ENCODE measurements at regions of chrX and their contacts with region 1.

Region 1: DNA sequence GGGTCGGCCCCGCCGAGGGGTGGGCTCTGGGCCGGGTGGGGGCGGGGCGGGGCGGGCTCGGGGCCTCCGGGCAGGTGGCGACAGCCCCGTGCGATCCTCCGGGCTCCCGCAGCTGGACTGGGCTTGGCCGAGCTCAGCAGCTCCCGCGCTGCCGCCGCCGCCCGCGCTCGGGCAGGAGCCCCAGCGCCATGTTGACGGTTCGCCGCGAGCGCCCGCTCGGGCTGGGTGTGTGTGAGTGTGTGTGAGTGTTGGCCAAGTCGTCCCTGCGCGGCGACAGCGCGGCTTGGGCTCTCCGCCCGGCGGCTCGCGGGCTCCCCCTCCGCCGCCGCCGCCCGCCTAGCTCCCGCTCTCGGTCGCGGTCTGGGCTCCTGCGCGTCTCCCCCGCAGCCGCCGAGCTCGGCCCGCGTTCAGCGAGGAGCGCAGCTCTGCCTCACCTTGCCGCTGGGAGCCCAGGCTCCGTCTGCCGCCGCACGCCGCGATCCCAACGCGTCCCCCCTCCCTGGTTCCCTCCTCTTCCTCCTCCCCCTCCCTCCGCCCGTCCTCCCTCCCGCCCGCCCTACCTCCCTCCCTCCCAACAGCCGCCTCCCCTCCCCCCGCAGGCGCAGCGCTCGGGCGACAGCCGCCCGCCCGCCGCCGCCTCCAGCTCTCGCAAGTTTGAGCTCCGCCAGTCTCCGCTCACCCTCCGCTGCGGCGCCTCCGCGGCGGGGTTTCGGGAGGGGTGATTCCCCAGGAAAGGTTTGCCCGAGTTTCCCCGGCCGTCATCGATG is at the start of gene BCOR:
- DNase-seq: no peak
- ATAC-seq: peak; percentile 18
- H3K4me3 ChIP-seq: peak within 1 kb of the TSS; percentile 72
- H3K27ac ChIP-seq: peak within 1 kb of the TSS; percentile 74
- H3K4me1 ChIP-seq: peaks cover 4% of the 10 kb centered on the region; the same call in 1 of the 2 replicates
- H3K27me3 ChIP-seq: no peaks in the 10 kb centered on the region
- CTCF ChIP-seq: no peak
- EP300 ChIP-seq: no peak
- POLR2A ChIP-seq: peak; percentile 90
- RAD21 ChIP-seq: no peak
- polyA plus RNA-seq, gene BCOR: 5.1 to 8.0 TPM

Region 2: DNA sequence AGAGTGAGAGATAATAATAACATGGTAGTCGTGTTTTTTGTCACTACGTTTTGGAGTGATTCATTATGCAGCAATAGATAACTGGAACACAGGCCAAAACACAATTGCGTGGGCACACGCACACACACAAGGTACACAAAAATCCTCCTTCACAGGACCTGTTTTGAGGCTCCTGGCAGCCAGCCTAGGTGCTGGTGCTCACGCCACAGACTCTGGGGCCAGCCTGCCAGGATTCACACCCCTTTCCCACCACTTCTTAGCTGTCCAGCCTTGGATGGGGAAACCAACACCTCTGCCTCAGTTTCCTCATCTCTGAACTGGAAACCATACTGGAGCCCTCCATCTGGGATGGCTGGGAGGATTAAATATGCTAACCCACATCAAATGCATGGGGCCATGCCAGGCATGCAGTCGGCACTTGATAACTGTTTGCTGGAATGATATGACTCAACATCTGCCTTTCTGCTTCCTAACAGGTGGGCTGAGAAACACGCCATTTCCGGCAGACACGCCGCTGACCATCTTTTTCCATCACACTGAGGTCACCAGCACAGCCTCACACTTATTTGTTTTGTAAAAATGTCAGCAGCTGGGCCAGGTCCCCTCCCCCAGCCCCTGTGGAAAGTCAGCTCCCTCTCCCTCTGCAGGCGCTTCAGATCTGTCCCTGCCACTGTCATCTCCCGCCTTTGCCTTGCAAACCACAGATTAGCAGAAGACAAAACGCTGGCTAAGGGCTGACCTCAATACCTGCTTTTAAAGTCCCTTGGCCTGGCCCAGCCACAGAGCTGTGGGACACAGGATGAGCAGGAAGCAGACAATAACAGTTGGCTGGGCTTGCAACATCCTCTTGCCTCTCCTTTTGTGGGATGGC is 237.5 kb before region 1 on chrX:
- CTCF ChIA-PET with region 1: interaction called, 3 read pairs
- POLR2A ChIA-PET with region 1: no interaction called
- RAD21 ChIA-PET with region 1: interaction called, 20 read pairs
- SMC1A ChIA-PET with region 1: no interaction called
- in situ Hi-C with region 1: no loop called
- intact Hi-C with region 1: loop called (anchors 5 kb)
- DNase-seq: peak; percentile 89
- ATAC-seq: peak; percentile 72
- H3K4me3 ChIP-seq: no peak overlapping the region
- H3K27ac ChIP-seq: peak overlapping the region; percentile 55
- H3K4me1 ChIP-seq: peaks cover 48% of the 10 kb centered on the region
- H3K27me3 ChIP-seq: no peaks in the 10 kb centered on the region
- CTCF ChIP-seq: no peak
- EP300 ChIP-seq: peak; percentile 91 to 98
- POLR2A ChIP-seq: no peak
- RAD21 ChIP-seq: no peak

Region 3: GRCh38 chrX:40013266-40014195 is 84.1 kb before region 1 on chrX:
- CTCF ChIA-PET with region 1: no interaction called
- POLR2A ChIA-PET with region 1: interaction called, 4 read pairs
- RAD21 ChIA-PET with region 1: interaction called, 5 read pairs
- SMC1A ChIA-PET with region 1: no interaction called
- in situ Hi-C with region 1: no loop called
- intact Hi-C with region 1: loop called (anchors 5 kb)
- DNase-seq: no peak
- ATAC-seq: peak; percentile 69
- H3K4me3 ChIP-seq: peak overlapping the region; percentile 57; the same call in 1 of the 2 replicates
- H3K27ac ChIP-seq: peak overlapping the region; percentile 42
- H3K4me1 ChIP-seq: peaks cover 5% of the 10 kb centered on the region; the same call in 1 of the 2 replicates
- H3K27me3 ChIP-seq: no peaks in the 10 kb centered on the region
- CTCF ChIP-seq: no peak
- EP300 ChIP-seq: no peak
- POLR2A ChIP-seq: peak; percentile 50; the same call in 1 of the 2 replicates
- RAD21 ChIP-seq: no peak

Region 4: GRCh38 chrX:40153335-40154249 is 55.9 kb after region 1 on chrX:
- CTCF ChIA-PET with region 1: no interaction called
- POLR2A ChIA-PET with region 1: no interaction called
- RAD21 ChIA-PET with region 1: interaction called, 8 read pairs
- SMC1A ChIA-PET with region 1: no interaction called
- in situ Hi-C with region 1: no loop called
- intact Hi-C with region 1: loop called (anchors 2 kb)
- DNase-seq: no peak
- ATAC-seq: peak; percentile 81
- H3K4me3 ChIP-seq: peak overlapping the region; percentile 39; the same call in 1 of the 2 replicates
- H3K27ac ChIP-seq: no peak overlapping the region
- H3K4me1 ChIP-seq: peaks cover 12% of the 10 kb centered on the region
- H3K27me3 ChIP-seq: no peaks in the 10 kb centered on the region
- CTCF ChIP-seq: no peak; a peak in 1 of 6 replicates
- EP300 ChIP-seq: no peak
- POLR2A ChIP-seq: no peak; the same call in 1 of the 2 replicates
- RAD21 ChIP-seq: peak; percentile 18; the same call in 1 of the 2 replicates

Region 5: GRCh38 chrX:40227125-40227524 is 129.4 kb after region 1 on chrX:
- CTCF ChIA-PET with region 1: no interaction called
- POLR2A ChIA-PET with region 1: no interaction called
- RAD21 ChIA-PET with region 1: no interaction called
- SMC1A ChIA-PET with region 1: no interaction called
- in situ Hi-C with region 1: no loop called
- intact Hi-C with region 1: no loop called
- DNase-seq: no peak
- ATAC-seq: no peak
- H3K4me3 ChIP-seq: no peak overlapping the region
- H3K27ac ChIP-seq: no peak overlapping the region
- H3K4me1 ChIP-seq: no peaks in the 10 kb centered on the region
- H3K27me3 ChIP-seq: no peaks in the 10 kb centered on the region
- CTCF ChIP-seq: no peak
- EP300 ChIP-seq: no peak
- POLR2A ChIP-seq: no peak
- RAD21 ChIP-seq: no peak

Region 6: GRCh38 chrX:40266490-40267333 is 169.0 kb after region 1 on chrX:
- CTCF ChIA-PET with region 1: interaction called, 3 read pairs
- POLR2A ChIA-PET with region 1: no interaction called
- RAD21 ChIA-PET with region 1: no interaction called
- SMC1A ChIA-PET with region 1: no interaction called
- in situ Hi-C with region 1: no loop called
- intact Hi-C with region 1: loop called (anchors 10 kb)
- DNase-seq: no peak
- ATAC-seq: peak; percentile 79
- H3K4me3 ChIP-seq: peak overlapping the region; percentile 41; the same call in 1 of the 2 replicates
- H3K27ac ChIP-seq: peak overlapping the region; percentile 52
- H3K4me1 ChIP-seq: peaks cover 14% of the 10 kb centered on the region
- H3K27me3 ChIP-seq: no peaks in the 10 kb centered on the region
- CTCF ChIP-seq: peak; percentile 51 to 55 (median 51)
- EP300 ChIP-seq: no peak
- POLR2A ChIP-seq: no peak
- RAD21 ChIP-seq: peak; percentile 69

Measured in GM12878 (cell line).